K562 (cell line): ENCODE measurements at regions of chr22 and their contacts with region 1.

Region 1: GRCh38 chr22:22508274-22509176 is at the start of gene ZNF280B:
- DNase-seq: peak; percentile 100
- ATAC-seq: peak; percentile 99
- H3K4me3 ChIP-seq: peak within 1 kb of the TSS; percentile 54
- H3K27ac ChIP-seq: peak within 1 kb of the TSS; percentile 63
- H3K4me1 ChIP-seq: peaks cover 12 to 13% of the 10 kb centered on the region in 2 experiments; a peak in 4 of 5 replicates
- H3K27me3 ChIP-seq: no peaks in the 10 kb centered on the region
- CTCF ChIP-seq: no peak
- EP300 ChIP-seq: no peak
- POLR2A ChIP-seq: no peak
- RAD21 ChIP-seq: no peak
- polyA plus RNA-seq, gene ZNF280B: 24.0 to 29.9 TPM

Region 2: DNA sequence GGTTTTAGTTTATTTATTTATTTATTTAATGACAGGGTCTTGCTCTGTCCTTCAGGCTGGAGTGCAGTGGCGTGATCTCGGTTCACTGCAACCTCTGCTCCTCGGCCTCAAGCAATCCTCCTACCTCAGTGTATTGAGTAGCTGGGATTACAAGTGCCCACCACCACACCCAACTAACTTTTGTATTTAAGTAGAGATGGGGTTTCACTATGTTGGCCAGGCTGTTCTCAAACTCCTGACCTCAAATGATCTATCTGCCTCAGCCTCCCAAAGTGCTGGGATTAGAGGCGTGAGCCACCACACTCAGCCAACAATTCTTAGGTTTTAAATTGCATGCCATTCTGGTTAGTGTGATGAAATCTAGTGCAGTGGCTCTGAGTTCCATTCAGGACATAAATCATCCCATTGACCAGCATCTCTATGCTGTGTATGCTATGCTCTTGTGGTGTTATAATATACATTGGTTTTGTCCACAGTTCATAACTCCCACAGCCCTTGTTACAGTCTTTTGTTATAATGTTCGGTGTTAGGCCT is 28.5 kb before region 1 on chr22:
- CTCF ChIA-PET with region 1: no interaction called
- POLR2A ChIA-PET with region 1: interaction called, 38 read pairs
- in situ Hi-C with region 1: no loop called
- intact Hi-C with region 1: no loop called
- DNase-seq: peak in 2 of 4 experiments; percentile 14 to 33
- ATAC-seq: peak; percentile 52
- H3K4me3 ChIP-seq: no peak overlapping the region
- H3K27ac ChIP-seq: no peak overlapping the region
- H3K4me1 ChIP-seq: peaks cover 0 to 7% of the 10 kb centered on the region in 2 experiments; a peak in 2 of 5 replicates
- H3K27me3 ChIP-seq: no peaks in the 10 kb centered on the region; a peak in 1 of 5 replicates
- CTCF ChIP-seq: no peak
- EP300 ChIP-seq: no peak
- POLR2A ChIP-seq: no peak
- RAD21 ChIP-seq: no peak

Region 3: DNA sequence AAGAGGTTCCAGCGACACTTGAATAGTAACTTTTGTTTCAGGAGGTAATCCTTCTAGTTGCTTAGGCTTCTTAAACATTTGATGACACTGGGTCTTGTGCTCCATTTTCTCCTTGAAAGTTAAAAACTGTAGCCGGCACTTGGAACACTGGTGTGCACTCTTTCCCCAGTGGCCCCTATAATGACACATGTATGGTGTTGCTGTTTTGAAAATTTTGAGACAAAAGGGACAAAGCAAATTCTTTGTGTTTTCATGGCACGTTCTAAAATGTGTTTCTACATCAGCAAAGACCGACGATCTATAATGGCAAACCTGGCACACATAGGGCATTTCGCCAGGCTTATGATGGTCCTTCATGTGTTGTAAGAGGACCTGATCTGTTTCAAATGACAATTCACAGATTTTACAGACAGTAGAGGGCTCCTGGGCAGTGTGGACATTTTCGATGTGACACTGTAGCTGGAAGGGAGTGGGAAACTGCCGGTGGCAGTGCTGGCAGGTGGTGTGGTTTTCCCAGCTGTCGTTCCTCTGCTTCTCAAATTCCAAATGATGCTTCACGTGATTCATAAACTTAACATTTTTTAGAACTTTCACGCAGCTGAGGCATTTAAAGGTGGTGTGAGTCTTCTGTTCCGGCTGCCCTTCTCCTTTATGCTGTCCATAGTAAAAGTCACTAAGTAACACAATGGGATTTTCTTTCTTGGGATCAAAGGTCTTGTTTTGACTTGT is 20.5 kb before region 1 on chr22:
- CTCF ChIA-PET with region 1: no interaction called
- POLR2A ChIA-PET with region 1: interaction called, 48 read pairs
- in situ Hi-C with region 1: no loop called
- intact Hi-C with region 1: no loop called
- DNase-seq: peak in 1 of 4 experiments; percentile 39
- ATAC-seq: no peak
- H3K4me3 ChIP-seq: no peak overlapping the region
- H3K27ac ChIP-seq: no peak overlapping the region
- H3K4me1 ChIP-seq: no peaks in the 10 kb centered on the region
- H3K27me3 ChIP-seq: no peaks in the 10 kb centered on the region
- CTCF ChIP-seq: no peak
- EP300 ChIP-seq: no peak
- POLR2A ChIP-seq: no peak
- RAD21 ChIP-seq: no peak

Region 4: DNA sequence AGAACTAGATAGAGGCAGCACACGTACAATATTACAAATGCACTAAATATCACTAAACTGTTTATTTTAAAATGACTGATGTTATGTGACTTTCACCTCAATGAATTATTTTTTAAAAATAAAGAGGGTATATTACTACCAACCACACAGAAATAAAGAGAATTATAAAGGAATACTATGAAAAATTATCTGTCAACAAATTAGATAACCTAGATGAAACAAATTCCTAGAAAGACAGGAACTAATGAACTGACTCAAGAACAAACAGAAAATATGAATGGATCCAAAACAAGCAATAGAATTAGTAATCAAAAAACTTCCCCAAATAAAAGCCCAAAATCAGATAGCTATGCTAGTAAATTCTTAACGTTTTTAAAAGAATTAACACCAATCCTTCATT is 10.3 kb before region 1 on chr22:
- CTCF ChIA-PET with region 1: no interaction called
- POLR2A ChIA-PET with region 1: interaction called, 289 read pairs
- in situ Hi-C with region 1: no loop called
- intact Hi-C with region 1: no loop called
- DNase-seq: no peak
- ATAC-seq: no peak
- H3K4me3 ChIP-seq: no peak overlapping the region
- H3K27ac ChIP-seq: no peak overlapping the region
- H3K4me1 ChIP-seq: no peaks in the 10 kb centered on the region
- H3K27me3 ChIP-seq: no peaks in the 10 kb centered on the region
- CTCF ChIP-seq: no peak
- EP300 ChIP-seq: no peak
- POLR2A ChIP-seq: no peak
- RAD21 ChIP-seq: no peak

Region 5: DNA sequence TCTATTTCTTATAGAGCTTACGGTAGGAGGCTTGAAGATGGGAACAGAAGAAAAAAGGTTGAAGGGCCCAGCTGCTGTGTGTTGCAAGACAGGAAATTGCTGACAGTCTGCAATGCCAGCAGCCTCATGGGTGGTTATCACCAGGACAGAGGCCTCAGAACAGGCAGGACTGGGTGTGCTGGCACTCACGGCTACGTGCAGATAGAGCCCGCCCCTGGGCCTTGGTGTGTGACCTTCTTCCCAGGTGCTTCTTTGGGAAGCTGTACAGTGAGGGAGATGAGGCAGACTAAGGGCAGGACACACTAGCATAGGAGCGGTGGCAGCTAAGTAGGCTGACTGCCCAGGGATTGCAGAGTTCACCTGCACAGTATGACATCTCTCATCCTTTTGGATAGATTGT is 38.0 kb after region 1 on chr22:
- CTCF ChIA-PET with region 1: no interaction called
- POLR2A ChIA-PET with region 1: interaction called, 111 read pairs
- in situ Hi-C with region 1: no loop called
- intact Hi-C with region 1: loop called (anchors 2 kb)
- DNase-seq: peak; percentile 56 to 72 (median 68)
- ATAC-seq: peak; percentile 44
- H3K4me3 ChIP-seq: no peak overlapping the region
- H3K27ac ChIP-seq: no peak overlapping the region; the same call in 2 of the 3 replicates
- H3K4me1 ChIP-seq: peaks cover 13 to 20% of the 10 kb centered on the region in 2 experiments
- H3K27me3 ChIP-seq: no peaks in the 10 kb centered on the region
- CTCF ChIP-seq: no peak
- EP300 ChIP-seq: no peak
- POLR2A ChIP-seq: no peak
- RAD21 ChIP-seq: no peak

Region 6: GRCh38 chr22:22552630-22553029 is 44.1 kb after region 1 on chr22:
- CTCF ChIA-PET with region 1: no interaction called
- POLR2A ChIA-PET with region 1: interaction called, 111 read pairs
- in situ Hi-C with region 1: no loop called
- intact Hi-C with region 1: loop called (anchors 2 kb)
- DNase-seq: peak; percentile 84 to 87 (median 86)
- ATAC-seq: peak; percentile 21
- H3K4me3 ChIP-seq: no peak overlapping the region
- H3K27ac ChIP-seq: peak overlapping the region; percentile 2; the same call in 2 of the 3 replicates
- H3K4me1 ChIP-seq: peaks cover 52 to 63% of the 10 kb centered on the region in 2 experiments
- H3K27me3 ChIP-seq: no peaks in the 10 kb centered on the region
- CTCF ChIP-seq: no peak
- EP300 ChIP-seq: no peak
- POLR2A ChIP-seq: no peak
- RAD21 ChIP-seq: no peak

Region 7: DNA sequence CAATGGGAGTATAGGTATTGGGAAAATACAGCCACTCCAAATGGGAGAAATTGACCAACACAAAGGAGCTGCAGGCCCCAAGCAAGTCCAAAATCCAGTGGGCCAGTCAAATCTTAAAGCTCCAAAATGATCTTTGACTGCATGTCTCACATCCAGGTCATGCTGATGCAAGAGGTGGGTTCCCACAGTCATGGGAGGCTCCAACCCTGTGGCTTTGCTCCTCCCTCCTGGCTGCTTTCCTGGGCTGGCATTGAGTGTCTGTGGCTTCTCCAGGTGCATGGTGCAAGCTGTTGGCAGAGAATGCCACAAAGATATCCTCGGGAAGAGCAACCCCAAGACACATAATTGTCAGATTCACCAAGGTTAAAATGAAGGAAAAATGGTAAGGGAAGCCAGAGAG is 459.8 kb after region 1 on chr22:
- CTCF ChIA-PET with region 1: no interaction called
- POLR2A ChIA-PET with region 1: no interaction called
- in situ Hi-C with region 1: no loop called
- intact Hi-C with region 1: no loop called
- DNase-seq: no peak
- ATAC-seq: peak; percentile 67
- H3K4me3 ChIP-seq: no peak overlapping the region
- H3K27ac ChIP-seq: no peak overlapping the region
- H3K4me1 ChIP-seq: no peaks in the 10 kb centered on the region
- H3K27me3 ChIP-seq: no peaks in the 10 kb centered on the region
- CTCF ChIP-seq: no peak
- EP300 ChIP-seq: no peak
- POLR2A ChIP-seq: no peak
- RAD21 ChIP-seq: no peak

Region 8: DNA sequence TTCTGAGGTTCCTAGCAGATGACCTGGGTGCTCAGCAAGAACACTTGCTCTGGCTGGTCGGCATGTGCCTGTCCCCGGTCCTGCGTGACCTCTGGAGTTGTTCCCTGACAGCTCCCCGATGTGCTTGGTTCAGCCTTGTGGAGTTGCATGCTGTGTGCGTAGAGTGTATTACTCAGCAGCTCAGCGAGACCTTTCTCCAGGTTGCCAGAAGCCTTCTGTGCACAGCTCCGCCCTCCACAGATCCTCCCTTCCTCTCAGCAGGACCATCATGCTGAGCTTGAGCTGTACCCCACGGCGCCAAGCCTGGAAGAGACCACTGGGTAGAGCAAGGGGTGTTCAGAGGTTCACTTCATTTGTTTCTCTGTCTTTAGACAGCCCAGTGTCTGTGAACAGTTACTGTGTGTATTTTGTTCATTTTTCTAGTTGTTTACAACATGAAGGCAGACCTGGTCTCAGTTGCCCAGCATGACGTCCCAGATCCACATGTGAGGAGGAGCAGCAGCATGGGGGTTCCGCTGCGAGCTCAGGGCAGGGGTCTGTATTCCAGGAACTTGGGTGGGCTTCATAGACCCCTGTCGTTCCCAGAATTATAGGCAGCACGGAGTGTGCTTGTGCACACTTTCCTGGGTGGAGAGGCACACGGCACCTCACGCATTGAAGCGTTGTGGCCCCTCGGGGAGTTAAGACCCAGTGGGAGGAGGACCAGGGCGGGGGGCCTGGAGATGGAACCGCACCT is 923.0 kb after region 1 on chr22:
- CTCF ChIA-PET with region 1: no interaction called
- POLR2A ChIA-PET with region 1: no interaction called
- in situ Hi-C with region 1: no loop called
- intact Hi-C with region 1: no loop called
- DNase-seq: peak; percentile 40 to 67 (median 52)
- ATAC-seq: peak; percentile 86
- H3K4me3 ChIP-seq: no peak overlapping the region
- H3K27ac ChIP-seq: peak overlapping the region; percentile 8; the same call in 1 of the 3 replicates
- H3K4me1 ChIP-seq: peaks cover 10 to 25% of the 10 kb centered on the region in 2 experiments; a peak in 3 of 5 replicates
- H3K27me3 ChIP-seq: no peaks in the 10 kb centered on the region
- CTCF ChIP-seq: no peak
- EP300 ChIP-seq: no peak
- POLR2A ChIP-seq: no peak
- RAD21 ChIP-seq: no peak